HEK293 (cell line): ENCODE measurements at regions of chr1 and their contacts with region 1.

Region 1: GRCh38 chr1:235415008-235415904 is 48.0 kb downstream of the TBCE start:
- H3K4me3 ChIP-seq: no peak overlapping the region
- H3K27ac ChIP-seq: no peak overlapping the region
- H3K4me1 ChIP-seq: no peaks in the 10 kb centered on the region; the same call in 1 of the 2 replicates
- CTCF ChIP-seq: peak; percentile 78

Region 2: DNA sequence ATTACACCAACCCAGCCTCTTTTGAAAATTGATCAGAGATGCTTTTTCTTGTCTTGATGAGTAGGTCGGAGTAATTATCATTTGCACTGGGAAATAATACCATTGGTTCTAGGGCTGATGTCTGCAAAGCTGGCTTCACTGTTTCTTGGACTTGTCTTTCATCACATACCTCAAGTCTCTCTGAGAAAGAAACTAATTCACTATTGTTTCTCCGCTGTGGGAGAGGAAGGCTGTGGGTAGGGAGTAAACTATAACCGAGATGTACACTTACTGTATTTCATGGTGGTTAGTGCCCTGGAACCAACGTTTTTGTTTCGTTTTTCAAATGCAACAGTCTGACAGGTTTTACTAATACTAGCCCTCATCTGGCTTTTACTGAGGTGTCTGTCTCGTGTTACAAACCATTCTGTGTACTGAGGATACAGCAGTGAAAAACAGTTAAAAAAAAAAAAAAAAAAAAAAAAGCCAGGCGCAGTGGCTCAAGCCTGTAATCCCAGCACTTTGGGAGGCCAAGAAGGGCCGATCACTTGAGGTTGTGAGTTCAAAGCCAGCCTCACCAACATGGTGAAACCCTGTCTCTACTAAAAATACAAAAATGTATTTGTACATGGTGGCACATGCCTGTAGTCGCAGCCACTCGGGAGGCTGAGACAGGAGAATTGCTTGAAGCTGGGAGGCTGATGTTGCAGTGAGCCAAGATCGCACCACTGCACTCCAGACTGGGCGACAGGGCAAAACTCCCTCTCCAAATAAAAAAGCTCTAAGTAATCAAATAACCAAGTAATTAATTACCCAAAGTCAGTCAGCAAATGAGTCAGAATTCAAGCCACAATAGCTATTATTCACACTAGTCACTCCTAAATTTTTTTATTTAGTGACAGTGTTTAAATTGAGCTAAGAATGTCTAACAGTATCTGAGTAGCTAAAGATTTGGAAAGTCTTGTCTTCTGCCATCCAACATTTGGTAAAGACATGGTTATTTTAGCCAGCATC is 309.9 kb before region 1 on chr1:
- CTCF ChIA-PET with region 1: interaction called, 27 read pairs
- POLR2A ChIA-PET with region 1: interaction called, 6 read pairs
- H3K4me3 ChIP-seq: no peak overlapping the region
- H3K27ac ChIP-seq: no peak overlapping the region
- H3K4me1 ChIP-seq: no peaks in the 10 kb centered on the region
- CTCF ChIP-seq: no peak

Region 3: DNA sequence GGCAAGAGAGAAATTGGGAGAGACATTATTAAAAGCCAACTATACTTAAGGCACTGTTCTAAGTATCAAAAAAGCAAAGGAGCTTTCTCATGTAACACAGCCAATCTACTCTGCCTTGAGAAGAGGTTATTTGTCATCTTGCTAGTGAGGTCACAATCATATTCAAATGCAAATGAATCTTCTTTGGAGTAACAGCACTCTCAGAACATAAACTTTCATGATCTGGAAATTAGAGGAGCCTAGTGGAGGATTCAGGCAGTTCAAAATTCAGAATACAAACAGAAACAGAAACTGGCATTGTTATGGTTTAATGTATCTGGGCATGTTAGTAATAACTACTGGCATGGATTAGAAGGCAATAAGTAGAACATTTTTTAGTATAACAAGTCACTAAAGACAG is 144.6 kb before region 1 on chr1:
- CTCF ChIA-PET with region 1: interaction called, 12 read pairs
- POLR2A ChIA-PET with region 1: no interaction called
- H3K4me3 ChIP-seq: no peak overlapping the region
- H3K27ac ChIP-seq: peak overlapping the region; percentile 1; the same call in 1 of the 2 replicates
- H3K4me1 ChIP-seq: peaks cover 24% of the 10 kb centered on the region
- CTCF ChIP-seq: no peak

Region 4: DNA sequence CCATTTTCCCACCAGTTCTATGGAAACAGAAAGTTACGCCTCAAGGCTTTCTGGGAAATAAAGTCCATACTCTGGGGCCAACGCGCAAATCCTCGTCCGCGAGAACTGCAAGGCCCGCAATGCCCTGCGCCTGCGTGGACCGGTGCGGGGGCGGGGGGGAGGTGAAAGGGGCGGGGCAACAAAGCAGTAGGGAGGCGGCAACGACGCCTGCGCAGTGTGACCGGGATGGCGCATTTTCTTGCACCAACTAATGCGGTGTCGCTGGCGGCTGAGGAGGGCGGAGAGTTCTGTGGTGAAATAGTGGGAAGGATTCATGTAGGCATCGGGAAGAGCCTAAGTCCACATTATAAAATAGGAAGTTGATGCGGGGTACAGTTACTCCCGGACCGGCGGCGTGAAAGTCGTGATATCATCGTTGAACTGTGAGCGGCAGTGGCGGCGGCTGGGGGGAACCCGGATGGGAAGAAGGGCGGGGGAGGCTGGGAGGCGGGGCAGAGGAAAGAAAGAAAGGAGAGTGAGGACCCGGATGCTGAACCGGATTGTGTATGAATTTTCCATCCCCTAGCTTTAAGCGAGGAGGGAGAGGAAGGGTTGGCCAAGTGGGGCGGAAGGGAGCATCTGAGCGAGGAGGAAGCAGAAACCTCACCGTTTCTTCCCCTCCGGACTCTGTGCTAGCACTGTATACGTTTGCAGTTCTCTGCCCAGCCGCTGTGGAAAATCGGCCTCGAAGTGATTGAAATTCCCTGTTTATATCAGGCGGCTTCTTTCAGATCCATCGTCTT is 86.7 kb before region 1 on chr1 and contains the start of gene GGPS1:
- CTCF ChIA-PET with region 1: interaction called, 42 read pairs
- POLR2A ChIA-PET with region 1: interaction called, 11 read pairs
- H3K4me3 ChIP-seq: peak within 1 kb of the TSS; percentile 97
- H3K27ac ChIP-seq: peak within 1 kb of the TSS; percentile 95
- H3K4me1 ChIP-seq: peaks cover 38% of the 10 kb centered on the region
- CTCF ChIP-seq: no peak; the same call in 1 of the 2 replicates

Region 5: GRCh38 chr1:235375919-235376605 is 39.2 kb before region 1 on chr1:
- CTCF ChIA-PET with region 1: interaction called, 21 read pairs
- POLR2A ChIA-PET with region 1: no interaction called
- H3K4me3 ChIP-seq: no peak overlapping the region
- H3K27ac ChIP-seq: peak overlapping the region; percentile 43
- H3K4me1 ChIP-seq: no peaks in the 10 kb centered on the region
- CTCF ChIP-seq: no peak

Region 6: DNA sequence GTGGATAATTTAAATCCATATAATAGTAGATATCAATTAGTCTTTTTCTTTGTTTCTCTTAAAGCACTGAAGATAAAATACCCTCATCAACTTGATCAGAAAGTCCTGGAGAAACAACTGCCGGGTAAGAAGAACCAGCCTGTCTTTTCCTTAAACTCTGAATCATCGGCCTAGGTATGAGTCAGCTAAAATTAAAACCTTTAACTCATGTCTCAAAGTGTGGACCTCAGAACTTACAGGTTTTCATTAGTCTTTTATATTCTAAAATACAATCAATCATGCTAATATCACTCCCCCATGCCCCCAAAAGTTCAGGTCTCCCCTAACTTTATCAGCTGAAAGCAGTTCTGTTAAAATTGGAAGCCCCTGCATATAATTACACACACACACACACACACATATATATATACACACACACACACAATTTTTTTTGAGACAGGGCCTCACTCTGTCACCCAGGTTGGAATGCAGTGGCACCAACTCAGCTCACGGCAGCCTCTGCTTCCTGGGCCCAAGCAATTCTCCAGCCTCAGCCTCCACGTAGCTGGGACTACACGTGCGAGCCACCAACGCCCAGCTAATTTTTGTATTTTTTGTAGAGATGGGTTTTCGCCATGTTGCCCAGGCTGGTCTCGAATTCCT is 27.7 kb after region 1 on chr1:
- CTCF ChIA-PET with region 1: interaction called, 11 read pairs
- POLR2A ChIA-PET with region 1: no interaction called
- H3K4me3 ChIP-seq: no peak overlapping the region
- H3K27ac ChIP-seq: no peak overlapping the region
- H3K4me1 ChIP-seq: no peaks in the 10 kb centered on the region
- CTCF ChIP-seq: no peak